ENCODE measurements at regions of chr5 and their contacts with region 1.

Region 1: DNA sequence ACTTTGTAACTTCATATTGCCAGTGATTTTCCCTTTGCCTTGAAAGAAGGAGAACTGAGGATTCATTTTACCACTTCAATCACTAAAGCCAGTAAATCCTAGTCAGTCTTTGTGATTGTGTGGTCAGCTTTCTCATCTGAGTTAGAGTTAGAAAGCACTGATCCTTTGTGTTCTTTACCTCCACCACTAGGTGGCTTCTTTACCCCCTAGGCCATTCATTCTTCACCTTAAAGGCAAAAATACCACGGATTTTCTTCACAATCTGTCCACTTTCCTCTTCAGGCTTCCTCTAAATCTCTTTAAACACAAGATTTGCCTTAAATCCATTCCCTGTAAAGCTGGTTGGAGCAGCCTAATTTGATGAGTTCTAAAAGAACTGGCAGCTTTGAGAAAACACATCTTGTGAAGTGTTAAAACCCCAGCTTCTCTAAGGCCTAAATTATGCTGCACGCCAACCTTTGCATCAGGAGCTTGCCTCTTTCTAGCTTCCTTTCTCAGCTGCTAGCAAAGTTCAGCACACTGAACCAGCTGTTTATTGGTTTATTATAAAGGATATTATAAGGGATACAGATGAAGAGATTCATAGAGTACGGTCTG is 20.4 kb downstream of the BDP1 start:
- DNase-seq: no peak
- ATAC-seq: peak; percentile 52

Region 2: GRCh38 chr5:71528206-71528605 is 52.3 kb after region 1 on chr5:
- intact Hi-C with region 1: loop called in 1 of 2 experiments (anchors 10 kb)
- DNase-seq: no peak
- ATAC-seq: no peak

Region 3: DNA sequence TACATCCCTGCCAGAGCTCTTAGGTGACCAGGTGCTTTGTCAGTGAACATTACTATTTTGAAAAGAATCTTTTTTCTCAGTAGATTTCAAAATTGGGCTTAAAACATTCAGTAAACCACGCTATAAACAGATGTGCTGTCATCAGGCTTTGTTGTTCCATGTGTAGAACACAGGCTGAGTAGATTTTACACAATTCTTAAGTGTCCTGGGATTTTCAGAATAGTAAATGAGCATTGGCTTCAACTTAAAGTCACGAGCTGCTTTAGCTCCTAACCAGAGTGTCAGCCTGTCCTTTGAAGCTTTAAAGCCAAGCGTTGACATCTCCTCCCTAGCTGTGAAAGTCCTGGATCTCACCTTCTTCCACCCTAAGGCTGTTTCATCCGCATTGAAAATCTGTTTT is 326.8 kb after region 1 on chr5:
- intact Hi-C with region 1: no loop called
- DNase-seq: no peak
- ATAC-seq: no peak